Activated CD4-positive, alpha-beta T cell treated with anti-CD3 and anti-CD28 coated beads, Interleukin-2, amount 10 ng/mL, durations not matched to agents 24 days and 14 days (primary cell): ENCODE measurements at regions of chr3 and their contacts with region 1.

Region 1: GRCh38 chr3:135929670-135930069 is 35.9 kb upstream of the PPP2R3A start:
- DNase-seq: no peak
- H3K4me3 Mint-ChIP-seq: no peak overlapping the region
- H3K27ac Mint-ChIP-seq: no peak overlapping the region
- H3K4me1 Mint-ChIP-seq: no peaks in the 10 kb centered on the region
- H3K27me3 Mint-ChIP-seq: no peaks in the 10 kb centered on the region

Region 2: GRCh38 chr3:136042608-136043221 is 113.0 kb after region 1 on chr3:
- intact Hi-C with region 1: loop called (anchors 10 kb)
- DNase-seq: no peak
- H3K4me3 Mint-ChIP-seq: no peak overlapping the region
- H3K27ac Mint-ChIP-seq: no peak overlapping the region
- H3K4me1 Mint-ChIP-seq: no peaks in the 10 kb centered on the region
- H3K27me3 Mint-ChIP-seq: peaks cover 6% of the 10 kb centered on the region